ENCODE measurements at regions of chr12 and their contacts with region 1.

Region 1: DNA sequence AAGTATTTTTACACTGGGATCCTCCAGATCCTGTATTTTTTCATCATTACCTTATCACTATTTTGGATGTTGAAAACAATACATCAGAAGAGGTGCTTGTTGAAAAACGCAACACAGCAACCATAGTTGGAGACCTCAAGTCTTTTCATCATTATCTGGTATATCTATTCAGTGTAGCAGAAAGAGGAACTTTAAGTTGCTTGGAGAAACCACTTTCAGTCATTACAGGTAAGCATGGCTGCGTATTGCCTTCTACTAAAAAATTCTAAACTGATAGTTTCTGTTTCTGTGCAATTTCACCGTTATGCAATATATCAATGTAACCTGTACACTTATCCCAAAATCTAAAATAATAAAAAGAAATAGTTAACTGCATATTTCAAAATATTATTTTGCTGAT is 32.2 kb upstream of the PTPRQ start:
- DNase-seq: no peak
- H3K4me3 ChIP-seq: no peak overlapping the region
- H3K27ac ChIP-seq: no peak overlapping the region
- H3K4me1 ChIP-seq: no peaks in the 10 kb centered on the region
- H3K27me3 ChIP-seq: no peaks in the 10 kb centered on the region
- CTCF ChIP-seq: no peak
- POLR2A ChIP-seq: no peak

Region 2: GRCh38 chr12:80353257-80353656 is 58.5 kb before region 1 on chr12:
- intact Hi-C with region 1: loop called (anchors 2 kb)
- DNase-seq: no peak
- H3K4me3 ChIP-seq: no peak overlapping the region
- H3K27ac ChIP-seq: no peak overlapping the region
- H3K4me1 ChIP-seq: no peaks in the 10 kb centered on the region
- H3K27me3 ChIP-seq: no peaks in the 10 kb centered on the region
- CTCF ChIP-seq: no peak
- POLR2A ChIP-seq: no peak